Sigmoid colon (tissue), 7 donors: ENCODE measurements at regions of chr12 and their contacts with region 1.

Region 1: DNA sequence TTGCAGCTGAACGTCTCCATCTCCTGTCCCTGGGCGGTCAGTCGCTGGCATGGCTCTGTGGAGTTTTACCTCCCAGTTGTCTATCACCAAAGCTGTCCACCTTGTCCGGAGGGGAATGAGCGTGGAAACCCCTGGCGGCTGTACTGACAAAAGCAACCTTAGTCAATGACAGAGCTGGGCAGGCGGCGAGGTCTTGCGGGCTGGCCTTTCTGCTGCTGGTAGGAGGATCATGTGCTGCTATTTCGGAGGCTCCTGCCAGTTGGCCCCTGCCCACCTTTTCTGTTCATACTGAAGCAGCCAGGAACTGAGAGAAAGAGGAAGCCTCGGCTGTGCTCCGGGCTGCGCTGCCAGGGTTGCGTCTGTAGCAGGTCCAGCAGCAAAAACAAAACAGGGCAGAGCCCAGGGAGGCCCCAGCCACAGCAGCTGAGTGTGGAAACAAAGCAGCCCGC is 57.7 kb downstream of the HMGA2 start:
- DNase-seq: peak; percentile 95
- H3K4me3 ChIP-seq: peak overlapping the region in 3 of 4 donors; percentile 32 to 42 (median 41)
- H3K27ac ChIP-seq: peak overlapping the region; percentile 60 to 75 (median 71)
- H3K4me1 ChIP-seq: peaks cover 0 to 30% (median 22%) of the 10 kb centered on the region in 4 donors
- H3K27me3 ChIP-seq: no peaks in the 10 kb centered on the region
- CTCF ChIP-seq: peak in 3 of 4 experiments; percentile 8 to 36 (median 20)
- EP300 ChIP-seq: no peak
- POLR2A ChIP-seq: no peak

Region 2: DNA sequence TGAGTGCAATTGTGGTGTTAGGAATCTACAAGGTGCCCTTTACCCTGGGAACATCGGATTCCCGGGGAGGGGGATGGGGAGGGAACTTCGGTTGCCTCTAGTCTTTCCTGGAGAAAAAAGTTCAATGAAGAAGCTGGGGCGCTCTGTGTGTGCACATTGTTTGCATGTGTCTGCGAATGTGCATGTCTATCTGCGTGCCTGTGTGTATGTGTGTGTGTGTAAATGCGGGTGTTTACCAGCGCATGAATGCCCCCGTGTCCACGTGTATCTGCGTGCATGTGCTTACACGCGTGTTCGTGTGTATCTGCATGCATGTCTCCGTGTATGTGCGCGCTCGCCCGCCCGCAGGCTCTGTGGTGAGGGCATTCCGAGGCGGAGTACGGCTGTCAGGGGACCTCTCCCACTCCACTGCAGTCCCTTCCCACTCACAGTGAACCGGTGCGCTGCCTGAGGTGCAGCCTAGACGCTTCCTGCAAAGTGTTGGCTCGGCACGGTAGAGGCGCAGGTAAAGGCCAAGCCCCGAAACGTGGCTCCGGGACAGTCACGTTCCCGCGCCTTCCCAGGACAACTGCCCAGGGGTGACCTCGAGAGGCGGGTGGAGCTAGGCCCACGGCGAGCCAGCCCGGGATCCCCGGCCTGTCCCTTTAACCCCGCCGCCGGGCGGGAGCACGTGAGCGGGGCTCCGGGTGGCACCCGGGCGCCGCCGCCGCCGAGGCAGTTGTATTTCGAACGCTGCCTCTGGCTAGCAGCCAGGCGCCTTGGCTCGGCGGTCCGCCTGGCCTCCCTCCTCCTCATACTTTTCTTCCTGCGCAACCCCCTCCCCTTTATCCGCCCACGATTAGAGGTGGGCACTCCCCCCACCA is 58.2 kb before region 1 on chr12:
- intact Hi-C with region 1: loop called (anchors 5 kb)
- DNase-seq: peak; percentile 58
- H3K4me3 ChIP-seq: peak overlapping the region; percentile 20 to 58 (median 46)
- H3K27ac ChIP-seq: no peak overlapping the region
- H3K4me1 ChIP-seq: peaks cover 0 to 37% (median 36%) of the 10 kb centered on the region in 4 donors
- H3K27me3 ChIP-seq: peaks cover 43 to 100% (median 67%) of the 10 kb centered on the region in 3 donors
- CTCF ChIP-seq: no peak
- EP300 ChIP-seq: no peak
- POLR2A ChIP-seq: no peak

Region 3: DNA sequence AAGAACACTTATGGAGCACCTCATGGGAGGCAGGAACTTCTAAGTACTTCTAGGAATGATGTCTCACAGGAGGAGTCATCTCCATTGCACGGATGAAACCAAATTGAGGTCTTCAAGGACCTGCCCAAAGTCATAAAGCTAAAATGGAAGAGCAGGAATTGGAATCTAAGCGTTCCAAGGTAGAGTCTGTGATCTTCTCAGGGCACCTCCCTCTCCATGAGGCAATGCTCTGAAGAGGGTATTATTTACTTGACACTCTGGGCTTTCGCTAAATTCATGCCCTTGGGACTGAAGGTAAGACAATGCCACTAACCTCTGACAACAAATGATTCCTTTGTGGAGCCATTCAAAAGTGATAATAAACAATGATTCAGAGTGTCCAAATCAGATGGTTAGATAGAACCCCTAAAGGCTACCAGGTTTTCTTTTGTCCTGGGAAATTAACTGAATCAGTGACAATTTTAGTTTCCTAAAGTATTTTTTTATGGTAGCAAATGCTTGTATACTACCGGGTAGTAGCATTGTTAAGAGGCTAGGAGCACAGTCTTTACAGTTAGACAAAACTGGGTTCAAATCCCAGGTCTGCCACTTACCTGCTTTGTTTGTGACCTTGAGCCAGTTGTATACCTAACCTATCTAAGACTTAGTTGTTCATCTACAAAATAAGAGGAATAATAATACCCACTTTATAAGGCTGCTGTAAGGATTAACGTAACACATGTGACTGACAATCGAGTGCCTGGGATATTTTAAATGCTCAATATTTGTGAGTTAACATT is 45.4 kb before region 1 on chr12:
- intact Hi-C with region 1: loop called (anchors 5 kb)
- DNase-seq: no peak
- H3K4me3 ChIP-seq: no peak overlapping the region
- H3K27ac ChIP-seq: no peak overlapping the region
- H3K4me1 ChIP-seq: no peaks in the 10 kb centered on the region
- H3K27me3 ChIP-seq: peaks cover 0 to 19% (median 0%) of the 10 kb centered on the region in 3 donors
- CTCF ChIP-seq: no peak
- EP300 ChIP-seq: no peak
- POLR2A ChIP-seq: no peak